ENCODE measurements at regions of chr3 and their contacts with region 1.

Region 1: DNA sequence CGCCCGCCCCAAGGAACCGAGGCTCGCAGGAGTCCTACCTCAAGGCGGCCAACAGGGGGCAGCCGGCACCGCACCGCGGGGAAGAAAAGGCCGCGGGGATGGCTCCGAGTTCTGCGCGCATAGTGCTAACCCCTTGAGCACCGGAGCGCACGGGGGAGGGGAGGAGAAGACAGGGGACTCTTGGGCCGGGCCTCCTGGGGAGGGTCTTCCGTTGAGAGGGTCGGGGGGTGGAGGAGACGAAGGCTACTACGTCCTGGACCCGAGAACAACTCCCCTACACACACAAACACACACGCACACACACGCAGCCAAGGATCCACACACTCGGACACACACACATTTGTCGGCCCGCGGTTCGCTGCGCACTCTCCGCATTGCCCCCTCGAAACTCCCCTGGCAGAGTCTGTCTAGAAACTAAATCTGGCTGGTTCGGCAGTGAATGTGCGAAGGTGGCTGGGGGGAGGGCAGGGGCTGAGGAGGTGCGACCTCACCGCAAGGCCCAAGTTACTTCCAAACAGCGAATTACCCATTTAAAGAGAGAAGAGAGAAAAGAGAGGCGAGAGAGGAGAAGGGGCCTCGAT is 1.8 kb downstream of the WNT5A start:
- DNase-seq: peak; percentile 24
- ATAC-seq: peak; percentile 90
- H3K4me3 ChIP-seq: no peak overlapping the region
- H3K27ac ChIP-seq: no peak overlapping the region
- H3K4me1 ChIP-seq: peaks cover 5% of the 10 kb centered on the region; the same call in 1 of the 2 replicates
- H3K27me3 ChIP-seq: peaks cover 4 to 36% of the 10 kb centered on the region in 2 experiments; a peak in 4 of 5 replicates
- CTCF ChIP-seq: peak; percentile 73
- EP300 ChIP-seq: no peak
- POLR2A ChIP-seq: no peak
- RAD21 ChIP-seq: 0 out of 2 replicates have a peak, but pooled peaks have one; percentile 26

Region 2: GRCh38 chr3:55500555-55501330 is 15.4 kb after region 1 on chr3:
- CTCF ChIA-PET with region 1: no interaction called
- POLR2A ChIA-PET with region 1: no interaction called
- in situ Hi-C with region 1: no loop called
- intact Hi-C with region 1: no loop called
- DNase-seq: no peak
- ATAC-seq: no peak
- H3K4me3 ChIP-seq: no peak overlapping the region
- H3K27ac ChIP-seq: no peak overlapping the region
- H3K4me1 ChIP-seq: no peaks in the 10 kb centered on the region
- H3K27me3 ChIP-seq: no peaks in the 10 kb centered on the region
- CTCF ChIP-seq: no peak
- EP300 ChIP-seq: no peak
- POLR2A ChIP-seq: no peak
- RAD21 ChIP-seq: no peak

Region 3: GRCh38 chr3:55746808-55747413 is 261.6 kb after region 1 on chr3:
- CTCF ChIA-PET with region 1: interaction called, 10 read pairs
- POLR2A ChIA-PET with region 1: no interaction called
- in situ Hi-C with region 1: loop called (anchors 10 kb)
- intact Hi-C with region 1: no loop called
- DNase-seq: no peak
- ATAC-seq: no peak
- H3K4me3 ChIP-seq: no peak overlapping the region
- H3K27ac ChIP-seq: no peak overlapping the region
- H3K4me1 ChIP-seq: no peaks in the 10 kb centered on the region
- H3K27me3 ChIP-seq: no peaks in the 10 kb centered on the region
- CTCF ChIP-seq: no peak
- EP300 ChIP-seq: no peak
- POLR2A ChIP-seq: no peak
- RAD21 ChIP-seq: no peak

Region 4: GRCh38 chr3:55899887-55900286 is 414.6 kb after region 1 on chr3:
- CTCF ChIA-PET with region 1: interaction called, 3 read pairs
- POLR2A ChIA-PET with region 1: no interaction called
- in situ Hi-C with region 1: loop called (anchors 5 kb)
- intact Hi-C with region 1: no loop called
- DNase-seq: peak; percentile 14
- ATAC-seq: peak; percentile 54; the same call in 1 of the 3 replicates
- H3K4me3 ChIP-seq: no peak overlapping the region
- H3K27ac ChIP-seq: no peak overlapping the region
- H3K4me1 ChIP-seq: no peaks in the 10 kb centered on the region
- H3K27me3 ChIP-seq: no peaks in the 10 kb centered on the region; a peak in 1 of 5 replicates
- CTCF ChIP-seq: peak; percentile 30
- EP300 ChIP-seq: no peak
- POLR2A ChIP-seq: no peak
- RAD21 ChIP-seq: no peak

Region 5: GRCh38 chr3:56251343-56251945 is 766.1 kb after region 1 on chr3:
- CTCF ChIA-PET with region 1: interaction called, 6 read pairs
- POLR2A ChIA-PET with region 1: no interaction called
- in situ Hi-C with region 1: loop called (anchors 10 kb)
- intact Hi-C with region 1: no loop called
- DNase-seq: peak; percentile 18
- ATAC-seq: no peak
- H3K4me3 ChIP-seq: no peak overlapping the region
- H3K27ac ChIP-seq: no peak overlapping the region
- H3K4me1 ChIP-seq: no peaks in the 10 kb centered on the region
- H3K27me3 ChIP-seq: no peaks in the 10 kb centered on the region
- CTCF ChIP-seq: peak; percentile 69
- EP300 ChIP-seq: no peak
- POLR2A ChIP-seq: no peak
- RAD21 ChIP-seq: no peak

Measured in HepG2 (cell line).